ENCODE measurements at regions of chr1 and their contacts with region 1.

Region 1: GRCh38 chr1:162035241-162035640 is 11.6 kb upstream of the OLFML2B start:
- DNase-seq: peak in 1 of 7 donors; percentile 32
- H3K4me3 ChIP-seq: no peak overlapping the region
- H3K27ac ChIP-seq: no peak overlapping the region
- H3K4me1 ChIP-seq: no peaks in the 10 kb centered on the region
- H3K27me3 ChIP-seq: no peaks in the 10 kb centered on the region
- CTCF ChIP-seq: no peak
- POLR2A ChIP-seq: no peak

Region 2: GRCh38 chr1:161792740-161793139 is 242.5 kb before region 1 on chr1:
- intact Hi-C with region 1: loop called (anchors 5 to 10 kb)
- DNase-seq: no peak
- H3K4me3 ChIP-seq: no peak overlapping the region
- H3K27ac ChIP-seq: peak overlapping the region in 1 of 5 donors; percentile 13
- H3K4me1 ChIP-seq: peaks cover 0 to 4% of the 10 kb centered on the region in 2 donors
- H3K27me3 ChIP-seq: no peaks in the 10 kb centered on the region
- CTCF ChIP-seq: peak; percentile 41 to 85 (median 74)
- POLR2A ChIP-seq: no peak

Region 3: GRCh38 chr1:161864577-161864976 is 170.7 kb before region 1 on chr1:
- intact Hi-C with region 1: loop called in 1 of 2 experiments (anchors 10 kb)
- DNase-seq: peak in 1 of 7 donors; percentile 23
- H3K4me3 ChIP-seq: no peak overlapping the region
- H3K27ac ChIP-seq: no peak overlapping the region
- H3K4me1 ChIP-seq: peaks cover 2 to 11% of the 10 kb centered on the region in 2 donors
- H3K27me3 ChIP-seq: no peaks in the 10 kb centered on the region
- CTCF ChIP-seq: peak in 4 of 6 experiments; percentile 28 to 46 (median 38)
- POLR2A ChIP-seq: no peak

Region 4: GRCh38 chr1:162117039-162117774 is 82.0 kb after region 1 on chr1:
- intact Hi-C with region 1: no loop called
- DNase-seq: no peak
- H3K4me3 ChIP-seq: no peak overlapping the region
- H3K27ac ChIP-seq: no peak overlapping the region
- H3K4me1 ChIP-seq: peaks cover 0 to 5% of the 10 kb centered on the region in 2 donors
- H3K27me3 ChIP-seq: no peaks in the 10 kb centered on the region
- CTCF ChIP-seq: no peak
- POLR2A ChIP-seq: no peak